Activated T-helper 2 cell treated with anti-CD3 and anti-CD28 coated beads, Interferon-gamma antibody, Interleukin-2, Interleukin-4, amounts not matched to agents 10 μg/mL and 5 μg/mL and 100 μg/mL, durations not matched to agents 14 hours and 24 hours and 36 hours (primary cell): ENCODE measurements at regions of chr13 and their contacts with region 1.

Region 1: GRCh38 chr13:50130123-50130946 is 115.1 kb downstream of the KCNRG start:
- DNase-seq: no peak
- H3K4me3 Mint-ChIP-seq: peak overlapping the region; percentile 68
- H3K27ac Mint-ChIP-seq: peak overlapping the region; percentile 17
- H3K4me1 Mint-ChIP-seq: peaks cover 40% of the 10 kb centered on the region
- H3K27me3 Mint-ChIP-seq: peaks cover 69% of the 10 kb centered on the region

Region 2: DNA sequence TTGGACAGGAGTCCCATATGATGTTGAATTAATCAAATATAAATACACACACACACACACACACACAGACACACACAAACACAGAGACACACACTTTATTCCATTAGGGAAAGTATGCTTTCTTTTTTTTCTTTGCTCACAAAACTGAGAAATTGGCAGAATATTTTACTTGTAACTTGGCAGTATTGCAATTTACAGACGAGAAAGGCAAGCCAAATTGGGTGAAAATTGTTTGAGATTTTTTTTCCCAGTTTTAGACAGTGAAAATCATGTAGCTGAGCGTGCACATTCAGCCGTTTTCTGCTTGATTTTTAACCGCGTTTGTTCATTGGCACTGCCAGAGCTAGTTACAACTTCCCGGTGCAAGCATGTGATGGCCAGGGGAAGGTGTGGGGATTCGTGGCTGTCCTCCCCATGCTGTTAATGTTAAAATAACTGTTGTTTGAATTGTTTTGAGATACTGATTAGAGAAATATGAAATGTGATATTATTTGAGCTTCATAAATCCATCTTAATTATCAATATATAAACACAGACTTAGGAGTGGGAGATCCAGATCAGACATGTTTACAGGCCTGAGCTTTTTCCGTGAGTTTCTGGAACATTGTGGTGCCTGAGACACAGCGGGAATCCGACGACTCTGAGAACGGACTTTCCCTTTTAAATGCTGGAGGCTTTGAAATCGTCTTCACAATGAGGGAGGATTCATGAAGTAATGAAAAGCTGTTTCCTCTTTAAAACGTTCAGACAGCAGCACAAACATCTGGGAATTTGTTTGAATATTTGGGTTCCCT is 10.4 kb after region 1 on chr13:
- intact Hi-C with region 1: loop called (anchors 1 kb)
- DNase-seq: no peak
- H3K4me3 Mint-ChIP-seq: no peak overlapping the region
- H3K27ac Mint-ChIP-seq: no peak overlapping the region
- H3K4me1 Mint-ChIP-seq: peaks cover 8% of the 10 kb centered on the region
- H3K27me3 Mint-ChIP-seq: peaks cover 62% of the 10 kb centered on the region

Region 3: DNA sequence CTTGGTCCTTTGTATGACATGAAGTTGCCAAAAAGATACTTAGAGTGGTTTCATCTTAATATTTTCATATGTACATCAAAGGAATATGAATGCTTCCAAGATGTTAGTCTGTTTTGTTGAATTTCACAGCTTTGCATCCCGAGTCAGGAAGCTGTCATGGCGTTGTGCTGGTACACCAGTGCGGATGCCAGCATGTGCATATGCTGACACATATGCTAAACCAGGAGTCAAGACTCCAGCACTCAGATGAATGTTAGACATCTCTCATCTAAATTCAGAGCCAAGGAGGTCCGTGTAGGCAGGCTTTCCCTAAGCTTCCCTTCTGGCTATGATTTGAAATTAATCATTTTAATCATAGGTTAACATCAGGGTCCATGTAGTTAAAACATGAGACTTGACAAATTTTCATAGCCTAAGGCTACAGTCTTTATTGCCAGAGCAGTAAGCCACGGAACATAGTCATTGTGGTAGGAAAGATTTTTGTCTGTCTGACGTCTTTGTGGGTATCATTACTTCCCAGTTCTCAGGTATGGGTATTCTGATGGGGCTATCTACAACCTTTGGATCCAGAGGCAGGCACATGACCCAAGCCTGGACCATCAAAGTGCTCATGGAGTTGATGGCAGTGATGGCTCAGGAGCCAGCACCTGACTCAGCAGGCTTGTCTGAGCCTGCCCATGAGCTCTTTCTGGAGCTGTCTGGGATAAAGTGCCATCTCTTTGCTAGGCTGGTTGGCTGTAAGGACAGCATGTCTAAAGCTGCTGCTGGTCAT is 131.0 kb after region 1 on chr13:
- intact Hi-C with region 1: no loop called
- DNase-seq: no peak
- H3K4me3 Mint-ChIP-seq: no peak overlapping the region
- H3K27ac Mint-ChIP-seq: no peak overlapping the region
- H3K4me1 Mint-ChIP-seq: peaks cover 19% of the 10 kb centered on the region
- H3K27me3 Mint-ChIP-seq: peaks cover 68% of the 10 kb centered on the region